CD4-positive, alpha-beta T cell (primary cell): ENCODE measurements at regions of chr17 and their contacts with region 1.

Region 1: DNA sequence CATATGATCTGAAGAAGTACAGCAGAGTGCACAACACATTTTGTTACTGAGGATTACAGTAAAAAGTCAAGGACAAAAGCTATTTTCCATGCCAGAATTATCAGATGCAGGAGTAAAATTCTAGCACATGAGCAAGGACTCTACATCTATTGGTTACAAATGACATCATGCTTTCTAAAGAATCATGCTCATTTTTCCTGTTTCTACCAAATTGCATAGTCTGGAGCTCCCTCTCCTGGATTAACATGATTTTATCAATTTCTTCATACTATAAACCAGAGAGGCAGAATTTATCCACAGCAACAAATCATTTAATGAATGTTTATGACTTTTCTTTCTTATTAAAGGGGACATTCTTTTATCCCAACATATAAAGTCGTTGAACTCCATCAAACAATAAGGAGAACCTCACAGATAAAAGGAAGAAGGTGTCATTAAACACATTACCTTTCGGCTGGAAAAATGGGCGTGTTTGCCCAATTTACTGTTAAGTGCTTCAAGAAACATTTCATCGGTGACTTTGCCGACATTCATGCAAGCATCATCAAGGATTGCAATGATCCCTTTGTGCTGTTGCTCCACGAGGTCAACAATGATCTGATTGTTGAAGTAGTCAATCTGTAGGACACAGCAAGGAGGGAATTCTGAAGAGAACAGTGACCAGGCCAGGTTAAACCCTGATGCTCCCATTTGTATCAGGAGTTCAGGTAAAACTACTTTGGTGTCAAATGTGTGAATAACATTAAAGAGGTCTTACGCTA is 121.7 kb downstream of the MYO1D start:
- DNase-seq: peak in 3 of 14 experiments; percentile 70 to 73 (median 72)
- ATAC-seq: peak; percentile 82
- H3K4me3 ChIP-seq: no peak overlapping the region
- H3K4me3 Mint-ChIP-seq: no peak overlapping the region
- H3K27ac ChIP-seq: no peak overlapping the region
- H3K27ac Mint-ChIP-seq: no peak overlapping the region
- H3K4me1 ChIP-seq: no peaks in the 10 kb centered on the region
- H3K4me1 Mint-ChIP-seq: peaks cover 13% of the 10 kb centered on the region
- H3K27me3 ChIP-seq: no peaks in the 10 kb centered on the region
- H3K27me3 Mint-ChIP-seq: no peaks in the 10 kb centered on the region
- CTCF ChIP-seq: peak; percentile 56

Region 2: DNA sequence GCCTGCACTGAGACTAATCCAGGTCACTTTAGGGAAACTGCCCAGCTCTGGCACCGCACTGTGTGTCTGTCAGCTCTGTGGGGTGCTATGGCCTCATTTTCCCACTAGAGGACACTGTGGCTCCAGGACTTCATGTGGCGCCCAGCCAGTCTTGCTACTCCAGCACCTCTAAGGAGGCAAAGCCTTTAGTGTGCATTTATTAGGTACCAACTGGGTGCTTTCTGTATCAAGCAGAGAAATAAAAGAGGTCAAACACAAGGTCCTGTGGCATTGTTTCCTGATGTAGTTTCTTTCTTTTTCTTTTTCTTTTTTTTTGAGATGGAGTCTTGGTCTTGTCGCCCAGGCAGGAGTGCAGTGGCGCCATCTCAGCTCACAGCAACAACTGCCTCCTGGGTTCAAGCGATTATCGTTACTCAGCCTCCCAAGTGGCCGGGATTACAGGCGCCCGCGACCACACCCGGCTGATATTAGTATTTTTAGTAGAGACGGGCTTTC is 502.1 kb before region 1 on chr17:
- CTCF ChIA-PET with region 1: no interaction called
- POLR2A ChIA-PET with region 1: no interaction called
- intact Hi-C with region 1: loop called in 1 of 2 experiments (anchors 5 kb)
- DNase-seq: peak; percentile 16 to 78 (median 46)
- ATAC-seq: peak; percentile 99
- H3K4me3 ChIP-seq: no peak overlapping the region
- H3K4me3 Mint-ChIP-seq: no peak overlapping the region
- H3K27ac ChIP-seq: no peak overlapping the region
- H3K27ac Mint-ChIP-seq: no peak overlapping the region
- H3K4me1 ChIP-seq: no peaks in the 10 kb centered on the region
- H3K4me1 Mint-ChIP-seq: no peaks in the 10 kb centered on the region
- H3K27me3 ChIP-seq: no peaks in the 10 kb centered on the region
- H3K27me3 Mint-ChIP-seq: peaks cover 14% of the 10 kb centered on the region
- CTCF ChIP-seq: peak; percentile 76

Region 3: GRCh38 chr17:32341857-32342602 is 413.2 kb before region 1 on chr17 and contains the start of gene C17orf75:
- CTCF ChIA-PET with region 1: no interaction called
- POLR2A ChIA-PET with region 1: no interaction called
- intact Hi-C with region 1: loop called in 1 of 2 experiments (anchors 5 kb)
- DNase-seq: peak; percentile 69 to 87 (median 78)
- ATAC-seq: peak; percentile 92
- H3K4me3 ChIP-seq: peak within 1 kb of the TSS; percentile 67
- H3K4me3 Mint-ChIP-seq: peak within 1 kb of the TSS; percentile 99
- H3K27ac ChIP-seq: peak within 1 kb of the TSS; percentile 58 to 62
- H3K27ac Mint-ChIP-seq: peak within 1 kb of the TSS; percentile 91
- H3K4me1 ChIP-seq: peaks cover 19% of the 10 kb centered on the region
- H3K4me1 Mint-ChIP-seq: peaks cover 28% of the 10 kb centered on the region
- H3K27me3 ChIP-seq: no peaks in the 10 kb centered on the region
- H3K27me3 Mint-ChIP-seq: no peaks in the 10 kb centered on the region
- CTCF ChIP-seq: no peak
- total RNA-seq, gene C17orf75: 12.8 to 15.9 TPM

Region 4: GRCh38 chr17:32609085-32609484 is 146.1 kb before region 1 on chr17:
- CTCF ChIA-PET with region 1: no interaction called
- POLR2A ChIA-PET with region 1: no interaction called
- intact Hi-C with region 1: loop called (anchors 2 to 5 kb)
- DNase-seq: peak; percentile 58 to 85 (median 70)
- ATAC-seq: peak; percentile 100
- H3K4me3 ChIP-seq: no peak overlapping the region
- H3K4me3 Mint-ChIP-seq: no peak overlapping the region
- H3K27ac ChIP-seq: no peak overlapping the region
- H3K27ac Mint-ChIP-seq: no peak overlapping the region
- H3K4me1 ChIP-seq: no peaks in the 10 kb centered on the region
- H3K4me1 Mint-ChIP-seq: peaks cover 6% of the 10 kb centered on the region
- H3K27me3 ChIP-seq: no peaks in the 10 kb centered on the region
- H3K27me3 Mint-ChIP-seq: no peaks in the 10 kb centered on the region
- CTCF ChIP-seq: peak; percentile 83

Region 5: GRCh38 chr17:32659419-32659842 is 95.8 kb before region 1 on chr17:
- CTCF ChIA-PET with region 1: no interaction called
- POLR2A ChIA-PET with region 1: no interaction called
- intact Hi-C with region 1: loop called in 1 of 2 experiments (anchors 2 kb)
- DNase-seq: peak; percentile 24 to 77 (median 56)
- ATAC-seq: peak; percentile 58
- H3K4me3 ChIP-seq: no peak overlapping the region
- H3K4me3 Mint-ChIP-seq: no peak overlapping the region
- H3K27ac ChIP-seq: no peak overlapping the region
- H3K27ac Mint-ChIP-seq: no peak overlapping the region
- H3K4me1 ChIP-seq: no peaks in the 10 kb centered on the region
- H3K4me1 Mint-ChIP-seq: no peaks in the 10 kb centered on the region
- H3K27me3 ChIP-seq: no peaks in the 10 kb centered on the region
- H3K27me3 Mint-ChIP-seq: no peaks in the 10 kb centered on the region
- CTCF ChIP-seq: peak; percentile 99

Region 6: GRCh38 chr17:32828822-32829221 is 73.6 kb after region 1 on chr17:
- CTCF ChIA-PET with region 1: no interaction called
- POLR2A ChIA-PET with region 1: no interaction called
- intact Hi-C with region 1: no loop called
- DNase-seq: no peak
- ATAC-seq: no peak
- H3K4me3 ChIP-seq: no peak overlapping the region
- H3K4me3 Mint-ChIP-seq: no peak overlapping the region
- H3K27ac ChIP-seq: no peak overlapping the region
- H3K27ac Mint-ChIP-seq: no peak overlapping the region
- H3K4me1 ChIP-seq: no peaks in the 10 kb centered on the region
- H3K4me1 Mint-ChIP-seq: peaks cover 7% of the 10 kb centered on the region
- H3K27me3 ChIP-seq: peaks cover 4 to 12% of the 10 kb centered on the region in 2 experiments
- H3K27me3 Mint-ChIP-seq: peaks cover 19% of the 10 kb centered on the region
- CTCF ChIP-seq: no peak